ENCODE measurements at regions of chr19 and their contacts with region 1.

Region 1: GRCh38 chr19:48993175-48994034 is at the starts of genes GYS1 and RUVBL2:
- DNase-seq: peak; percentile 100
- H3K4me3 Mint-ChIP-seq: peak within 1 kb of the TSS; percentile 95
- H3K27ac Mint-ChIP-seq: peak within 1 kb of the TSS; percentile 95
- H3K4me1 Mint-ChIP-seq: peaks cover 34% of the 10 kb centered on the region
- H3K27me3 Mint-ChIP-seq: no peaks in the 10 kb centered on the region
- CTCF ChIP-seq: peak; percentile 90
- total RNA-seq, gene GYS1: 29.7 and 42.7 TPM in 2 replicates
- total RNA-seq, gene RUVBL2: 126 and 156 TPM in 2 replicates

Region 2: GRCh38 chr19:48899781-48900476 is 93.5 kb before region 1 on chr19 and contains the start of gene NUCB1:
- CTCF ChIA-PET with region 1: no interaction called
- POLR2A ChIA-PET with region 1: interaction called, 13 read pairs
- intact Hi-C with region 1: no loop called
- DNase-seq: peak; percentile 99
- H3K4me3 Mint-ChIP-seq: peak within 1 kb of the TSS; percentile 99
- H3K27ac Mint-ChIP-seq: peak within 1 kb of the TSS; percentile 87
- H3K4me1 Mint-ChIP-seq: peaks cover 14% of the 10 kb centered on the region
- H3K27me3 Mint-ChIP-seq: no peaks in the 10 kb centered on the region
- CTCF ChIP-seq: no peak
- total RNA-seq, gene NUCB1: 61.4 and 76.8 TPM in 2 replicates

Region 3: DNA sequence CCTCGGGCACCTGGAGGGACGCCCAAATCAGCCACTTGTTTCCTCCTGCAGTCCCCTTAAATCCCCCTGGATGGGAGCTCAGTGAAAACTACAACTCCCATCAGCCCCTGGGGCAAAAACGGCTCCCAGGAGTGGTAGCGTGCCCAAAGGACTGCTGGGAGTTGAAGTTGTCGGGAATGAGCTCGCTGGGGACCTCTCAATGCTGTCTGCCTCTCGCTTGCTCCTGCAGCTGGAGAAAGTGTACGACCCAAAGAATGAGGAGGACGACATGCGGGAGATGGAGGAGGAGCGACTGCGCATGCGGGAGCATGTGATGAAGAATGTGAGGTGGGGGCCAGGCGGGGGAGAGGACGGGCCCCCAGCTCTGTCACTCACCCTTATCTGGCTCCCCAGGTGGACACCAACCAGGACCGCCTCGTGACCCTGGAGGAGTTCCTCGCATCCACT is 74.6 kb before region 1 on chr19:
- CTCF ChIA-PET with region 1: no interaction called
- POLR2A ChIA-PET with region 1: no interaction called
- intact Hi-C with region 1: no loop called
- DNase-seq: no peak
- H3K4me3 Mint-ChIP-seq: no peak overlapping the region
- H3K27ac Mint-ChIP-seq: no peak overlapping the region
- H3K4me1 Mint-ChIP-seq: no peaks in the 10 kb centered on the region
- H3K27me3 Mint-ChIP-seq: no peaks in the 10 kb centered on the region
- CTCF ChIP-seq: no peak

Region 4: DNA sequence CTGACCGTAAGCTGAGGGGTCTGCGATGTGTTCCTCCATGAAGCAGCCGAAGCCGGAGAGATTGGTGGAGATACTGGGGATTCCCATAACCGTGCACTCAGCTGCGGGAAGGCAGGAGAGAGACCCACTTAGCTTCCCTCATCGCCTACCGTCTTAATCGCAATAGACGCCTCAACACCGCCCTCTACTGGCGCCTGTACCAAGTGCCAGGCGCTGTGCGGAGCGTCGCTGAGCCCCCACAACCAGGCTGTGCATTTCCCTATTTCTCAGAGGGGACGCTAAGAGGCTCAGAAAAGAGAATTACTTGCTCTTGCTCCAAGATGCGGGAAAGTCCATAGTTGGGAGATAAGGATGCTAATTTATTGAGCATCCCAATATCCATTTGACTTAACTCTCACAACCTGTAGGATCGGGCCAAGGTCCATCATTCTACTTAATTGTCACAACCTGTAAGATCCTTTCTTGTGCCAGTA is 22.4 kb before region 1 on chr19:
- CTCF ChIA-PET with region 1: interaction called, 39 read pairs
- POLR2A ChIA-PET with region 1: interaction called, 98 read pairs
- intact Hi-C with region 1: no loop called
- DNase-seq: peak; percentile 75
- H3K4me3 Mint-ChIP-seq: no peak overlapping the region
- H3K27ac Mint-ChIP-seq: no peak overlapping the region
- H3K4me1 Mint-ChIP-seq: peaks cover 6% of the 10 kb centered on the region
- H3K27me3 Mint-ChIP-seq: no peaks in the 10 kb centered on the region
- CTCF ChIP-seq: peak; percentile 89

Region 5: DNA sequence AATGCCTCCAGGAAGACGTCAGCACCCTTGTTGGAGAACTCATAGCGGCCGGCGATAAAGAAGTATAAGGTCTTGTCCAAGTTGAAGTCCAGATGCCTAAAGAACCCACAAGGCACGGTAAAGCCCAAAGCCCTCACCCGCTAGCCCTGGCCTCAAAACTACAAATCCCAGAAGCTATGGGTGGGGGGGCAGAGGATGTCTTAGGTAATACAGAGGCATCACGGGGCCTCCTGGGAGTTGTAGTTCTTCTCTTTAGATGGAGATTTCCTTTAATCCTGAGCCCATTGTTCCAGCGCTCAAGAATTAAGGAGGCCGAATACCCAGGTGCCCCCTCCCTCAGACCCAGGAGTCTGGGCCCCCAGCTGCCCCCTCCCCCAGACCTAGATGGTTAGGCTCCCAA is 11.1 kb before region 1 on chr19:
- CTCF ChIA-PET with region 1: interaction called, 39 read pairs
- POLR2A ChIA-PET with region 1: interaction called, 61 read pairs
- intact Hi-C with region 1: loop called (anchors 1 kb)
- DNase-seq: no peak
- H3K4me3 Mint-ChIP-seq: no peak overlapping the region
- H3K27ac Mint-ChIP-seq: no peak overlapping the region
- H3K4me1 Mint-ChIP-seq: peaks cover 12% of the 10 kb centered on the region
- H3K27me3 Mint-ChIP-seq: no peaks in the 10 kb centered on the region
- CTCF ChIP-seq: no peak

Region 6: GRCh38 chr19:49019242-49019932 is 26.0 kb after region 1 on chr19:
- CTCF ChIA-PET with region 1: interaction called, 13 read pairs
- POLR2A ChIA-PET with region 1: interaction called, 11 read pairs
- intact Hi-C with region 1: no loop called
- DNase-seq: peak; percentile 83
- H3K4me3 Mint-ChIP-seq: peak overlapping the region; percentile 57
- H3K27ac Mint-ChIP-seq: no peak overlapping the region
- H3K4me1 Mint-ChIP-seq: peaks cover 18% of the 10 kb centered on the region
- H3K27me3 Mint-ChIP-seq: no peaks in the 10 kb centered on the region
- CTCF ChIP-seq: no peak

Region 7: DNA sequence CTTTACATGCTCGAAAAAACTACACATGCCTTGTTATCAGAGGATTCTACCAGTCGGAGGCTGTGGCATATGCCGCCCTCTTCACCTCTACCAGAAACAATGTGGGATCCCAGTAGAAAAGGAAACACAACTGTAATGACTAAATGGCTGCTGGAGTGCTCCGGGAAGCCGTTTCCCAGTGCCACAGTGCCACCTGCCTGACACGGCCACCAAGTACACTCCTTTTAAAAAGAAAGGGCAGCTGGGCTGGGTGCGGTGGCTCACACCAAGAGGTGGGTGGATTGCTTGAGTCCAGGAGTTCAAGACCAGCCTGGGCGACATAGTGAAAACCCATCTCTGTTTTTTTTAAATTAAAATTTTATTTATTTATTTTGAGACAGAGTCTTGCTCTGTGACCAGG is 231.5 kb after region 1 on chr19:
- CTCF ChIA-PET with region 1: no interaction called
- POLR2A ChIA-PET with region 1: no interaction called
- intact Hi-C with region 1: loop called (anchors 10 kb)
- DNase-seq: peak; percentile 77
- H3K4me3 Mint-ChIP-seq: no peak overlapping the region
- H3K27ac Mint-ChIP-seq: no peak overlapping the region
- H3K4me1 Mint-ChIP-seq: no peaks in the 10 kb centered on the region
- H3K27me3 Mint-ChIP-seq: no peaks in the 10 kb centered on the region
- CTCF ChIP-seq: peak; percentile 59